Head of caudate nucleus (tissue), 42 donors: ENCODE measurements at regions of chr14 and their contacts with region 1.

Region 1: DNA sequence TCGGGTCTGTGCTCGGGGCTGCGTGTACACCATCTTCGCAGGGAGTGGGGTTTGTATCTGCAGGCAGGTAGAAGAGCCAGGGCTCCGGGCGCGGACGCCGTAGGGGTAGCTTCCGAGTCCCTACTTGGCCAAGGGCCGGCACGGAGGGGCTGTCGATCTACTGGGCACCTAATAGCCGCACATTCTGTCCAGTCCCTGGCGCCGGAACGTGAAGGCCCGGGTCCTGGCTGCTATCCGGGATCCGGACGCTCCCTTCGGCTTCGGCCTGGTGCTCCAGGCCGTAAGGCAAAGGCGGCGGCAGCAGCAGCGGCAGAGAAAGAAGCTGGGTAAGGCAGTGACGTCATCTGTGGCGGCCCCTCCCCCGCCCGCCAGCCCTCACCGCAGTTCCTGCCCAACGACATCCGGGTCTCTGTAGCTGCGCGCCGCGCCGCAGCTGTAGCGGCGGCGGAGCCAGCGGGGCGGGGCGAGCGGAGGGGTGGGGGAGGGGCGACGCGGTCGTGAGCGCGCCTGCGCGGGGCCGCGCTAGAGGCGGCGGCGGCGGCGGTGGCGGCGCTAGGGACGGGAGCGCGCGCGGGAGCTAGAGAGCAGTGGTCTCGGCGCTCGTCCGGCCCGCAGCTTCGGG is at the start of gene PPM1A:
- DNase-seq: peak; percentile 86 to 98 (median 95)

Region 2: GRCh38 chr14:60091550-60092530 is 157.0 kb before region 1 on chr14 and contains the start of gene PCNX4:
- intact Hi-C with region 1: loop called (anchors 5 kb)
- DNase-seq: peak; percentile 93 to 99 (median 97)

Region 3: DNA sequence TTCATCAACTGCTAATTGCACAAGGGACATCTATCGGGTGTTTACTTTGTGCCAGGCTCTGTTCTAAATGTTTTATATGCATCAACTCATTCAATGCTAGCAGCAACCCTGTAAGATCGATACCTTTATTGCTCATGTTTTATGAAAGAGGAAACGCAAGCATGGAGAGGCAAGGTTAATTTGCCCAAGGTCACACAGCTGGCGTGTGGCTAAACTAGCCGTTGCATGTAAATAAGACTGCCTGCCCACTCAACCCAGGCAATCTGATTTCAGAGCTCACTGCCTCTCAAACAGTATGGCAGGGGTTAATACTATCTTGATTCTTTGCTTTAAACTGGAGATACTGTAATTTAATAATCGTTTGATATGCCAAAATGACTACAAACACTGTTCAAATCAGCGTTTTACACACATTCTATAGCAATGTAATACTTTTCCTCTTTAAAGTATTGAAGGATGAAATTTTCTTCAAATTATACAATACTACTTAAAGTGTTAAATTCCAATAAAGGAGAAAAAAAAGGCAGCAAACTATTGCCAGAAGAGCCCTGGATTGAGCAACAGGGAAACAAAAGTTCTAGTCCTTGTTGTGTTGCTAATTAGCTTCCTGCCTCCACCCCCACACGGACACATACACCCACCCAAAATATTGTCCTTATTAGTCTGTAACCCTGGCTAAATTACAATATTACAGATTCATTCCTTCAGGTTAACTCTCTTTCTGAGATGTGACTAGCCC is 44.5 kb before region 1 on chr14:
- intact Hi-C with region 1: no loop called
- DNase-seq: no peak

Region 4: GRCh38 chr14:60266021-60266937 is 17.5 kb after region 1 on chr14:
- intact Hi-C with region 1: no loop called
- DNase-seq: no peak